ENCODE measurements at regions of chr20 and their contacts with region 1.

Region 1: DNA sequence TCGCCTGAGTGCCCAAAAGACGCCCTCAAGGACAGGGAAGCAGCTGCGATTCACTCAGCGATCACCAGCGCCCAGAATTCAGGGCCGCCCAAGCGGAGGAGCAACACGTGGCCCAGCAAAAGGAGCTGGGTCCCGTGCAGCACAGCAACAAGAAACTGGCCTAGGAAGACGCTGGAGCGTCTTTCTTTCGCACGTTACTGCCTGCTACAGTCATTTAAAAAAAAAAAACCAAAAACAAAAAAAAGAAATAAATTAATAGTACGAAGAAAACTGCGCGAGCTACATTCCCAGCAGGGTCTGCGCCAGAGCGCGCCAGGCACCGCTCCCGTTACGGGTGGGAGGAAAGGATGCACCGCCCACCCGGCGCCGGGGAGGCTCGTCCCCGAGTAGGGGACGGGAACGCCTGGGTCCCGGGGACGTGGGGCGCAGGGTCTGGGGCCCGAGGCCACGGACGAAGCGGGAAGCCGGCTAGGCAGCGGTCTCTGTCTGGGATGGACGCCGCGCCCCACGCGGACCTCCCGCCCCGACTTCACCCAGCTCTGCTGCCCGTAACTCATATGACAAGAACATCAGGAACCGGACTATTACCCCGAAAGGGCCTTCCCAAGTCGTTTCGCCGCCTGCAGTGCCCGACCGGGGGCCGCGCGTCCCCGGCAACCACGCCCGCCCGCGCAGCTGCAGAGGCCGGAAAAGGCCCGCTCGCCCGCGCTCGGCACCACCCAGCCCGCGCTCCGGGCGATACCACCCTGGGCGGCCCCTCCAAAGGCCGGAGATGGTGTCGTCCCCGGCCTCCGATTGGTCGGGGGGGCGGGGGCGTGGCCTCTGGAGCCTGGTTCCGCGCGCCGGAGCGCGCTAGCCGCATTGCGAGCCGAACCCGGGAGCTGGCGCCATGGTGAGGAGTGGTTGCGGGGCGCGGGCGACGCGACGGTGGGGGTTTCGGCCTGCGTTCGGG is at the start of gene NOP56:
- DNase-seq: peak; percentile 94
- H3K4me3 Mint-ChIP-seq: peak within 1 kb of the TSS; percentile 93
- H3K27ac Mint-ChIP-seq: peak within 1 kb of the TSS; percentile 93
- H3K4me1 Mint-ChIP-seq: peaks cover 24% of the 10 kb centered on the region
- H3K27me3 Mint-ChIP-seq: no peaks in the 10 kb centered on the region
- total RNA-seq, gene NOP56: 863 and 897 TPM in 2 replicates

Region 2: DNA sequence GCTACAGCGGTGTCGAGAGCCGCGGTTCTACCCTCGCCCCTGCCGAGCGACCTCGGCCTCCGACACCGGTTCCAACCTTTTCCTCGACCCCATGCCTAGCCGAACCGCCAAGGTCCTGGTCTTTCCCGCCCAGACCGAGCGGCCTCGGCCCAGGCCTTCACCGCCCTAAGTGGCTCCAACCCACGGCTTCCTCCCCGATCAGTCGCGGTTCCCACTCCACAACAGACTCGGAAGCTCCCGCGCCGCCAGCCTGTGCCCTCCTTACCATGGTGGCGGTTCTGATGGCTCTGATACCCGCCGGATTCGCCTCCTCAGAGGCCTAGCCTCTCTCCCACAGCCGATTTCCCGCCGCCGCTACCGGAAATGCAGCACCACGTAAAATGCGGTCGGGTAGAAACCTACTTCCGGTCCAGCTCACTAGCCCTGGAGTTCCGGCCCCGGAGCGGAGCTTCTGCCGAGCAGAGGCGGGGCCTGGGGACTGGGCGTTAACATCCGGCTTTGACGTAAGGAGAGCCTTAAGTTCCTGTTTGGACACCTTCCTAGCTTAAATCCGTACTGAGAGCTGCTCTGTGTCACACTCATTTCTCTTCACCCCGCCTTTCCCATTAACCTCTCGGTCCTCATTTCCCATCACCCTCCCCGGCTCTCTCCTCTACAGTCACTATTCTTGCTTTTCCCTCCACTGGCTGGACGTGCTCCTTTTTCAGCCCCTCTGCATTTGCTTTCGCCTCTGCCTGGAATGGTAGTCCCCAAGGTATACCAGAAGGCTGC is 181.4 kb before region 1 on chr20 and contains the start of gene SNRPB:
- intact Hi-C with region 1: loop called (anchors 1 kb)
- DNase-seq: peak; percentile 96
- H3K4me3 Mint-ChIP-seq: peak within 1 kb of the TSS; percentile 99
- H3K27ac Mint-ChIP-seq: peak within 1 kb of the TSS; percentile 97
- H3K4me1 Mint-ChIP-seq: peaks cover 58% of the 10 kb centered on the region
- H3K27me3 Mint-ChIP-seq: no peaks in the 10 kb centered on the region
- total RNA-seq, gene SNRPB: 533 and 548 TPM in 2 replicates

Region 3: DNA sequence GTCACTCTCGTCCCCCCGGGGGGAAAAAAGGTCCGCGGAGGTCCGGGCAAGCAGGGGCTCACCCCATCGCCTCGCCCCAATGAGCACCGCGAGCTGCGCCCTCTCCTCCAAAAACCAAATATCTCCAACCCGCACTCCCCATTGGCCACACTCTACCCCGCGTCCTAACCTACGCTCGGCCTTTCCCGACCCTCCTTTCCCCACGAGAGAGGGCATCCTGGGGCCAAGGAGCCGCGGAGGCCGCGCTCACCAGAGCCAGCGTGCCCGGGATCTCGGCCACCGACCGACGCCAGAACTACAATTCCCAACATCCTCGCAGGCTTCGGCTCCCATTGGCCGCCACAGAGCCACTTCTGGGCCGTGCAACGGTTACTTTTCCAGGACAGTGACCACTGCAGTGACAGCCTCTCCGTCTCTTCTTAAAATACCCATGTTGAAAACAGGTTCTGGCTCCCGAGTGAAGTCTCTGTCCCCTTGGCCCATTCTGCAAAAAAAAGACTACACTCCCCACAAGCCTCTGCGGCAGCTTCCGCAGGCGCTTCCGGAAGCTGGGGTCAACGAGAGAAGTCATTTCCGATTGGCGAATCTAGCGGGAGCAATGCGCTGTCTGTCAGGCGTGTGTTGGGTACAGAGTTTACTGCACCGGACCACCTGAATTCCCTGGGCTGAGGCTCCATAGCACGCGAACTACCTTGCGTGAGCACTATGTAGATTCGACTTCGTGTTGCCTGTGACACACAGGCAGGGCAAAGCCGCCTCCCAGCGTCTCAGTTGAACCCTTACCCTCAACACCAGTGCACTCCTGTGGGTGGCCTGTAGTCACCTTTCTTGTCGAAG is 143.2 kb before region 1 on chr20 and contains the start of gene ZNF343:
- intact Hi-C with region 1: loop called (anchors 1 kb)
- DNase-seq: peak; percentile 74
- H3K4me3 Mint-ChIP-seq: peak within 1 kb of the TSS; percentile 98
- H3K27ac Mint-ChIP-seq: peak within 1 kb of the TSS; percentile 99
- H3K4me1 Mint-ChIP-seq: peaks cover 18% of the 10 kb centered on the region
- H3K27me3 Mint-ChIP-seq: peaks cover 19% of the 10 kb centered on the region
- total RNA-seq, gene ZNF343: 18.2 and 21.6 TPM in 2 replicates

Region 4: GRCh38 chr20:2523919-2524708 is 127.9 kb before region 1 on chr20:
- intact Hi-C with region 1: loop called (anchors 1 kb)
- DNase-seq: peak; percentile 87
- H3K4me3 Mint-ChIP-seq: peak overlapping the region; percentile 85
- H3K27ac Mint-ChIP-seq: peak overlapping the region; percentile 87
- H3K4me1 Mint-ChIP-seq: peaks cover 26% of the 10 kb centered on the region
- H3K27me3 Mint-ChIP-seq: peaks cover 7% of the 10 kb centered on the region

Region 5: DNA sequence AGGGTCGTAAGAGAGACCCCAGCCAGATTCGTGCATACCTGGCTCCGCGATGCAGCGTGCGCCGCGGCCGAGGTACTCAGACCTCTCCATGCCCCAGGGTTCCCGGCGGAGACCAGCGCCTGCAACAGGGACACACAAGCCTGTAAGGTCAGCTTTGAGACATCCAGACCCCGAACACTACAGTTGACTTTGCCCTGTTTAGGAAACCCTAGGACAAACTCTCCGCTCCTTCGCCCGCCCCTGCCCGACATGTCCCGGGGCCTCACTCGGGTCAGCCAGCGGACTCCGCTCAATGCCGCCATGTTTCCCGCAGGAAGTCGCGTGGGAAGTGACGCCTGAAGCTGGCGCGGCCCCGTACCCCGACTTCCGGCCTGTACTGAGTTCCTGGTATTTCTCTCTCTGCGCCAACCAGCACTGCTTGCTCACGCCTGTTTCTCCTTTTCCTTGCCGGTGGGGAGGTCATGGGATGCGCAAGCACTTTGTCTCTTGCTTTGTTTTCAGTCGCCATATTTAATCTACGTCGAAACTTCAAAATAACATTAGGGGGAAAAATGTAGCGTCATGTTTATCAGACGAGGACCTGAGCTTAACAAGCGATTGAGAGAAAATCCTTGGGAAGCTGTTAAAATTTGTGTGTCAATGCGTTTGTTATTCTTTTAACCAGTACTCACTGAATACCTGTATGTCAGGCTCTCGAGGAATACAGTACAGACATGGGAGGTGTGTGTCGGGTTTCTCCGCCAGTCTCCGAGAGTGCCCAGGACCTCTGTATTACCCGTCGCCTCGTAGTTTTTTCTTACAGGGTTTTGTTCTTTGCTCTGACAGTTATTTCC is 12.1 kb after region 1 on chr20 and contains the start of gene IDH3B:
- intact Hi-C with region 1: loop called (anchors 1 kb)
- DNase-seq: peak; percentile 91
- H3K4me3 Mint-ChIP-seq: peak within 1 kb of the TSS; percentile 89
- H3K27ac Mint-ChIP-seq: peak within 1 kb of the TSS; percentile 97
- H3K4me1 Mint-ChIP-seq: peaks cover 17% of the 10 kb centered on the region
- H3K27me3 Mint-ChIP-seq: peaks cover 6% of the 10 kb centered on the region
- total RNA-seq, gene IDH3B: 116 and 125 TPM in 2 replicates

Region 6: GRCh38 chr20:2688041-2688591 is 36.1 kb after region 1 on chr20:
- intact Hi-C with region 1: loop called (anchors 1 kb)
- DNase-seq: peak; percentile 76
- H3K4me3 Mint-ChIP-seq: peak overlapping the region; percentile 16
- H3K27ac Mint-ChIP-seq: peak overlapping the region; percentile 77
- H3K4me1 Mint-ChIP-seq: peaks cover 34% of the 10 kb centered on the region
- H3K27me3 Mint-ChIP-seq: peaks cover 13% of the 10 kb centered on the region

Region 7: GRCh38 chr20:3045816-3046676 is 394.0 kb after region 1 on chr20 and contains the start of gene MRPS26:
- intact Hi-C with region 1: loop called (anchors 1 kb)
- DNase-seq: peak; percentile 80
- H3K4me3 Mint-ChIP-seq: peak within 1 kb of the TSS; percentile 95
- H3K27ac Mint-ChIP-seq: peak within 1 kb of the TSS; percentile 78
- H3K4me1 Mint-ChIP-seq: peaks cover 11% of the 10 kb centered on the region
- H3K27me3 Mint-ChIP-seq: no peaks in the 10 kb centered on the region
- total RNA-seq, gene MRPS26: 106 and 114 TPM in 2 replicates

Measured in activated T-helper 1 cell treated with anti-CD3 and anti-CD28 coated beads, Interleukin-12 subunit alpha, Interleukin-12 subunit beta, Interleukin-2, Interleukin-4 antibody, amounts not matched to agents 30 ng/mL and 10 ng/mL and 1 ng/mL, durations not matched to agents 14 hours and 24 hours and 36 hours (primary cell).